Left colon (tissue), 2 donors: ENCODE measurements at regions of chr5 and their contacts with region 1.

Region 1: GRCh38 chr5:178075840-178076548 is 37.3 kb upstream of the N4BP3 start:
- DNase-seq: peak; percentile 41 to 82
- ATAC-seq: peak; percentile 96

Region 2: DNA sequence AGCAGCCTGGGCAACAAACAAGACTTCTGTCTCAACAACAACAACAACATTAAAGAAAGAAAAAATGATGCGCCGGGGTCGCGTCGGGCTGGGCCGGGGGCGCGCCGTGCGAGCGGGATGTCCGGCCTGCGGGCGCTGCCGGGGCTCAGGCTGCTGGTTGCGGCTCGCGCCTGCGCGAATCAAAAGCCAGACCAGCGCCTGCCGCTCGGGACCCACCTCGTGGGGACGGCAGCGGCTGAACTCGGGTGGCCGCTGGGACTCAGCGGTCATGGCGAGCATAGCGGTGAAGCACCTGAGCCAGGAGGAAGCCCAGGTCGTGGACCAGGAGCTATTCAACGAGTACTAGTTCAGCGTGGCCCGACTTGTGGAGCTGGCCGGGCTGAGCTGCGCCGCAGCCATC is 89.6 kb after region 1 on chr5:
- intact Hi-C with region 1: loop called in 1 of 2 experiments (anchors 5 kb)
- DNase-seq: no peak
- ATAC-seq: no peak

Region 3: GRCh38 chr5:178331399-178331996 is 255.5 kb after region 1 on chr5:
- intact Hi-C with region 1: no loop called
- DNase-seq: peak; percentile 48 to 64
- ATAC-seq: peak; percentile 96

Region 4: DNA sequence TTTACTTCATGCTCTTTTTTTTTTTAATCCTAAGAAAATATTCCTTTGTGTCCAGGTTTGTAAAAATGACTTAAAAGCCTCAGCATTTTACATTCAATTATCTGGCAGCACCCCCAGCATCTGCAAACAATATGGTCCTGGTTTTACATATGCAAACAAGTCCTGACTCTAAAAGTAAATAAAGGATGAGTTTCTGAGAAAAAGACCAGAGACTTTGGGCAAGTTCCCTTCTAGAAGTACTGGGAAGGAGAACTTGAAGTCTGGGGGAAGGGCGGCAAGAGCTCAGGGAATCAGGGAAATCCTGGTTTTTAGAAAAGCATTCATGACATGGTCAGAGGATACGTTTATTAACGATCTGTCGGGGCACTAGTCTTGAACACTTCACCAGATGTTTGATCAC is 488.4 kb after region 1 on chr5:
- intact Hi-C with region 1: no loop called
- DNase-seq: no peak
- ATAC-seq: no peak

Region 5: GRCh38 chr5:178612299-178612698 is 536.3 kb after region 1 on chr5:
- intact Hi-C with region 1: no loop called
- DNase-seq: no peak
- ATAC-seq: no peak